ENCODE measurements at regions of chr18 and their contacts with region 1.

Region 1: DNA sequence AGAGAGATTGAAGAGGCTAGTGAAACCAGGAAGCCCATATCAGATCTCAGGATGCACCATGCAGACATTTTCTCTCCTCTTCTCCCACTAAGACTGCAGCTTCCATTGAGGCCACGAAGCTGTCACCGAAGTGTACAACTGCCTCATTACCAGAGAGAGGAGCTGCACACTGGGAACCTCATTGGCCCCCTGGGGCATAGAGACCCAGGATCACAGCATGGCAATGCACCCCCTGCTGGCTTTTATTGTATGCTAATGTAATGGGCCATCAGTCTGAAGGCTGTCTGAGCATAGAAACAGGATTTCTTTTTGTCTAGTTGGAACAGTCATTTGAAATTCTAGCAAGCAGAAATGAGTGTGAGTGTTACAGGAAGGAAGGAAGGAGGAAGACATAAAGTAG is 861.6 kb upstream of the CELF4 start:
- DNase-seq: no peak
- ATAC-seq: no peak
- H3K4me3 ChIP-seq: no peak overlapping the region
- H3K4me3 Mint-ChIP-seq: no peak overlapping the region
- H3K27ac ChIP-seq: no peak overlapping the region
- H3K27ac Mint-ChIP-seq: no peak overlapping the region
- H3K4me1 ChIP-seq: no peaks in the 10 kb centered on the region
- H3K4me1 Mint-ChIP-seq: peaks cover 0 to 1% (median 0%) of the 10 kb centered on the region in 7 donors
- H3K27me3 ChIP-seq: no peaks in the 10 kb centered on the region
- H3K27me3 Mint-ChIP-seq: no peaks in the 10 kb centered on the region

Region 2: DNA sequence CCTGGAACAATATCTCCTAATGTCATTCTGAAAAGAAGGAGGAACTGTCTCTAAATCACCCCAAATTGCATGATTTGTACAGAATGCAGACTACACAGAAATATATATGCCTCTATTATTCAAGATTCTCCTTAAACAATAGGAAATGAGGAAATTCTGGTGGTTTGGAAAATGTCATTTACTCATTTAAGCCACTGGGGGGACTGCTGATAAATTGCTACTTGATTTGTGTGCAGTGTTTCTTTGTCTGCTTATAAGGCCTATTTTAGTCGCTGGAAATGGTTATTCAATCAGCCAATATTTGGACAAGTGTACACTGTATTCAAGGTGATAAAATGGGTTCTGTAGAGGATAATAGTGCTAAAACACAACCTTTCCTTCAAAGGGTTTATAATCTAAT is 59.8 kb before region 1 on chr18:
- CTCF ChIA-PET with region 1: no interaction called
- POLR2A ChIA-PET with region 1: no interaction called
- intact Hi-C with region 1: loop called in 1 of 2 experiments (anchors 10 kb)
- DNase-seq: no peak
- ATAC-seq: no peak
- H3K4me3 ChIP-seq: no peak overlapping the region
- H3K4me3 Mint-ChIP-seq: no peak overlapping the region
- H3K27ac ChIP-seq: no peak overlapping the region
- H3K27ac Mint-ChIP-seq: no peak overlapping the region
- H3K4me1 ChIP-seq: no peaks in the 10 kb centered on the region
- H3K4me1 Mint-ChIP-seq: peaks cover 0 to 11% (median 9%) of the 10 kb centered on the region in 7 donors
- H3K27me3 ChIP-seq: no peaks in the 10 kb centered on the region
- H3K27me3 Mint-ChIP-seq: no peaks in the 10 kb centered on the region

Region 3: GRCh38 chr18:38493961-38494559 is 66.8 kb after region 1 on chr18:
- CTCF ChIA-PET with region 1: no interaction called
- POLR2A ChIA-PET with region 1: no interaction called
- intact Hi-C with region 1: loop called in 1 of 2 experiments (anchors 10 kb)
- DNase-seq: no peak
- ATAC-seq: no peak
- H3K4me3 ChIP-seq: no peak overlapping the region
- H3K4me3 Mint-ChIP-seq: no peak overlapping the region
- H3K27ac ChIP-seq: no peak overlapping the region
- H3K27ac Mint-ChIP-seq: no peak overlapping the region
- H3K4me1 ChIP-seq: no peaks in the 10 kb centered on the region
- H3K4me1 Mint-ChIP-seq: peaks cover 0 to 10% (median 6%) of the 10 kb centered on the region in 7 donors
- H3K27me3 ChIP-seq: no peaks in the 10 kb centered on the region
- H3K27me3 Mint-ChIP-seq: peaks cover 0 to 4% (median 0%) of the 10 kb centered on the region in 5 donors

Region 4: DNA sequence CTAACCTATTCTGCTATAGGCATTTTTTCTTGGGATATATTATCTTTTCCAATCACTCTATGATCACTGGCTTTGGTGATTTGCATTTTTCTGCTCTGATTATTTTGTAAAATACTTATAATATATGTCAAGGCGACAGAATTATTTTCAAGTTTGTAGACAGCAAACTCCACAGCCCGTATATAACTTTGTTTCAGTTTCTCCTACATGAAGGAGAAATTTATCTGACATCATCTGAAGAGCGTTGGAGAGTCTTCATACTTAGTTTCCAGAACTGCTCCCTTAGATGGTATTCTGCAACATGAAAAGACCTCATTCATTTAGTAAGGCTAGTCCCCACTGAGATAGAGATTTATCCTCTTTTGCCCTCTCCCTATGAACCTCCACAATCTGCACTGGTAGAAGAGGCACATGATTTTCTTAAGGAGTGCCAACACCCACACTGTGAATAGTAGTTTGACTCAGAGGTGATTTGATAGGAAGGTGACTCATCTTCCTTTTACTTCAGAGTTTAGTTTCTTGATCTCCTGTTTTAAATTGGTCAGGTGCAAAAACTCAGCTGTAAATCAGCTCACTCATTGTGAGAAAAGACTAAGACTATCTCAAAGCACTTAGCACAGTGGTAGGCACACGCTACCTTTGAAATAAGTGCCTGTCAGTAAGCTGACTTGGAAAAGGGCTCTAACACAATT is 986.9 kb after region 1 on chr18:
- CTCF ChIA-PET with region 1: no interaction called
- POLR2A ChIA-PET with region 1: no interaction called
- intact Hi-C with region 1: no loop called
- DNase-seq: no peak
- ATAC-seq: no peak
- H3K4me3 ChIP-seq: no peak overlapping the region
- H3K4me3 Mint-ChIP-seq: no peak overlapping the region
- H3K27ac ChIP-seq: no peak overlapping the region
- H3K27ac Mint-ChIP-seq: no peak overlapping the region
- H3K4me1 ChIP-seq: no peaks in the 10 kb centered on the region
- H3K4me1 Mint-ChIP-seq: peaks cover 0 to 5% (median 0%) of the 10 kb centered on the region in 7 donors
- H3K27me3 ChIP-seq: no peaks in the 10 kb centered on the region
- H3K27me3 Mint-ChIP-seq: no peaks in the 10 kb centered on the region